Endothelial cell of umbilical vein (primary cell): ENCODE measurements at regions of chr16 and their contacts with region 1.

Region 1: GRCh38 chr16:48632137-48632774 is 22.3 kb upstream of the N4BP1 start:
- DNase-seq: no peak
- H3K4me3 ChIP-seq: no peak overlapping the region
- H3K27ac ChIP-seq: no peak overlapping the region
- H3K4me1 ChIP-seq: no peaks in the 10 kb centered on the region
- H3K27me3 ChIP-seq: no peaks in the 10 kb centered on the region
- CTCF ChIP-seq: no peak
- POLR2A ChIP-seq: no peak

Region 2: DNA sequence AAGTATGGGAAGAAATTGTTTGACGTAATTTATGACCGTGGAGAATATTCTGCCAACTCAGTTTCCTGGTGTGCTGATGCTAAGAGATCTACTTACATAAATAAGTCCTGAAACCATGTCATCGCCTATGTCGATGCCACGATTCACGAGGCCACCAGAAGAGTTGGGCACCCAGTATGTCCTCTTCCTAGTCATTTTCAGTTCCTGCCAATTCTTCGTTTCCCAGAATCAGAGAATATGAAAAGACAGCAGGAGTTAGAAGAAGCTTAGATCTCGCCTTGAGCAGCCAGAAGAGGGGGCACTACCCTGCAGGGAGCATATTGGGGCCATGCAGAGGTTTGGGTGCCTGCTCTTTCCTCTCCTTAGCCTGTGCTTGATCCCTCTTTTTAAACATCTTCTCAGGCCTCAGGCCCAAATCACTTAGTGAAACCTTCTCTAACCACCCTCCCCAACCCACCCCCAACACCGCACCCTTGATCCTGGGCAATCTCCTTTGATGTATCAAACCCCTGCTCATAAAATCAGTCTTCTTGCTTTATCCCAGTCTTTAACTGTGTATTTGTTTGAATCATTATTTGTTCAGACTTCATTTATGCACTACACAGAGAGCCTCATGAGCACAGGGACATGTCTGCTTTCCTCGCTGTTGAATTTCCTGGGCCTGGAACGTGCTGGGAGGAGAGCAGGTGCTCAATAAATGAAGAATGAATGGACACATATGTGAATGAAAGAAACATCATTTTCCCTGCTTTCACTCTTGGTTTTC is 400.3 kb before region 1 on chr16:
- CTCF ChIA-PET with region 1: interaction called, 85 read pairs
- POLR2A ChIA-PET with region 1: no interaction called
- dilution Hi-C with region 1: no loop called
- intact Hi-C with region 1: loop called (anchors 1 kb)
- DNase-seq: peak; percentile 53
- H3K4me3 ChIP-seq: no peak overlapping the region
- H3K27ac ChIP-seq: no peak overlapping the region
- H3K4me1 ChIP-seq: no peaks in the 10 kb centered on the region
- H3K27me3 ChIP-seq: peaks cover 0 to 2% of the 10 kb centered on the region in 2 experiments
- CTCF ChIP-seq: peak; percentile 35 to 67
- POLR2A ChIP-seq: no peak

Region 3: DNA sequence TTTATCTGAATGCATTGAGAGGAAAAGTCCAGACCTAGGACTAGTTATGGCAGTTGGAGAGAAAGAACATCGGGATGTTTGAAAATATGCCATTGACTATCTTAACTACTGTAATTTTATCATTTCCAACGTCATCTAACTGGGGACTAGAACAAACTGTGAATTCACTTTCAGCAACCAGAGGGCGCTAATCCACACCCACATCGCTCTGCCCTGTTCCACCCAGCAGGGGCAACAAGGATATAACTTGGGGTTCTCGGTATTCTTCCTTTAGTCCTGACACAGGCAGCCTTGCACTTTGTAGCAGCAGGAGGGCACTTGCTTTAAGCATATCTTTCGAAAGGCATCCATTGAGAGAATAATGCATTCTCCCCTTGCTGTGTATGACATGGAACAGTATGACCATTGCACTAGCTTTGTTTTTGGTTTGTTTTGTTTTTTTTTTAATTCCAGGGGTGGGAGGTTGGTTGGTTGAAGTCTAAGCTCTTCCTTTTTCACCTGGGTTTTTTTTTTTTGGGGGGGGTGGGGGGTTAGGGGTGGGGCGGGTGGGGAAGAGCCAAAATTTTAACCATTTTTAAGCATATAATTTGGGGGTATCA is 278.6 kb before region 1 on chr16:
- CTCF ChIA-PET with region 1: interaction called, 73 read pairs
- POLR2A ChIA-PET with region 1: interaction called, 10 read pairs
- dilution Hi-C with region 1: no loop called
- intact Hi-C with region 1: loop called (anchors 1 kb)
- DNase-seq: peak; percentile 75
- H3K4me3 ChIP-seq: no peak overlapping the region
- H3K27ac ChIP-seq: no peak overlapping the region
- H3K4me1 ChIP-seq: no peaks in the 10 kb centered on the region
- H3K27me3 ChIP-seq: no peaks in the 10 kb centered on the region
- CTCF ChIP-seq: peak; percentile 83 to 88
- POLR2A ChIP-seq: no peak

Region 4: GRCh38 chr16:48365581-48366164 is 266.6 kb before region 1 on chr16:
- CTCF ChIA-PET with region 1: interaction called, 25 read pairs
- POLR2A ChIA-PET with region 1: no interaction called
- dilution Hi-C with region 1: no loop called
- intact Hi-C with region 1: no loop called
- DNase-seq: peak; percentile 89
- H3K4me3 ChIP-seq: peak overlapping the region; percentile 57 to 83 (median 70)
- H3K27ac ChIP-seq: peak overlapping the region; percentile 66
- H3K4me1 ChIP-seq: peaks cover 14% of the 10 kb centered on the region
- H3K27me3 ChIP-seq: no peaks in the 10 kb centered on the region
- CTCF ChIP-seq: peak in 1 of 2 donors; percentile 18
- POLR2A ChIP-seq: peak; percentile 50

Region 5: DNA sequence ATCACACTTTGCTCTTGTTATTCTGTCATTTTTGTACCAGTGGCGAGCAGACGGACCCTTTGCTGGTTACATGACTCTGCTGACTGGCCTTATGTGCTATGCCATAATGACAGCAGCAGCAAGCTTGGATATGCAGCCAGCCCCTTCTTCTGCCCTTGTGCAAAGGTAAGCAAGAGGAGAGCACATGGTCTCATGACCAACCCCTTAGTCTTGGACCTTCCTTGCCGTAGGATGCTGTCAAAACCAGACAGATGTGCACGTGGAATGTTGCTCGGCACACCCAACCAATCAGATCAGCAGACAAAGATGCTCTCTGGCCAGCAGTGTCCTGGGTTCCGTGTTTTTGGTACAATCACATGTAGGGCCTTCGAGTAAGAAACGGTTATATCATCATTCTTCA is 17.5 kb before region 1 on chr16:
- CTCF ChIA-PET with region 1: interaction called, 12 read pairs
- POLR2A ChIA-PET with region 1: no interaction called
- dilution Hi-C with region 1: no loop called
- intact Hi-C with region 1: no loop called
- DNase-seq: no peak
- H3K4me3 ChIP-seq: no peak overlapping the region
- H3K27ac ChIP-seq: no peak overlapping the region
- H3K4me1 ChIP-seq: no peaks in the 10 kb centered on the region
- H3K27me3 ChIP-seq: peaks cover 4 to 5% of the 10 kb centered on the region in 2 experiments
- CTCF ChIP-seq: no peak
- POLR2A ChIP-seq: no peak